ENCODE measurements at regions of chr7 and their contacts with region 1.

Region 1: GRCh38 chr7:94395141-94396036 is 694 bp downstream of the COL1A2 start:
- DNase-seq: peak; percentile 63
- H3K4me3 ChIP-seq: no peak overlapping the region
- H3K27ac ChIP-seq: no peak overlapping the region
- H3K4me1 ChIP-seq: peaks cover 15% of the 10 kb centered on the region
- H3K27me3 ChIP-seq: peaks cover 2% of the 10 kb centered on the region
- CTCF ChIP-seq: peak; percentile 78 to 80

Region 2: GRCh38 chr7:93799750-93800357 is 595.5 kb before region 1 on chr7:
- CTCF ChIA-PET with region 1: no interaction called
- dilution Hi-C with region 1: no loop called
- in situ Hi-C with region 1: no loop called
- intact Hi-C with region 1: loop called (anchors 5 kb)
- DNase-seq: peak; percentile 12
- H3K4me3 ChIP-seq: no peak overlapping the region
- H3K27ac ChIP-seq: no peak overlapping the region
- H3K4me1 ChIP-seq: no peaks in the 10 kb centered on the region
- H3K27me3 ChIP-seq: peaks cover under 1% of the 10 kb centered on the region
- CTCF ChIP-seq: peak; percentile 60 to 64

Region 3: GRCh38 chr7:94087664-94088352 is 307.6 kb before region 1 on chr7:
- CTCF ChIA-PET with region 1: no interaction called
- dilution Hi-C with region 1: no loop called
- in situ Hi-C with region 1: no loop called
- intact Hi-C with region 1: loop called (anchors 10 kb)
- DNase-seq: peak; percentile 62
- H3K4me3 ChIP-seq: no peak overlapping the region
- H3K27ac ChIP-seq: no peak overlapping the region
- H3K4me1 ChIP-seq: no peaks in the 10 kb centered on the region
- H3K27me3 ChIP-seq: peaks cover 8% of the 10 kb centered on the region
- CTCF ChIP-seq: peak; percentile 82 to 86

Region 4: GRCh38 chr7:94223375-94224070 is 171.9 kb before region 1 on chr7:
- CTCF ChIA-PET with region 1: no interaction called
- dilution Hi-C with region 1: no loop called
- in situ Hi-C with region 1: no loop called
- intact Hi-C with region 1: no loop called
- DNase-seq: peak; percentile 67
- H3K4me3 ChIP-seq: no peak overlapping the region
- H3K27ac ChIP-seq: no peak overlapping the region
- H3K4me1 ChIP-seq: peaks cover 6% of the 10 kb centered on the region
- H3K27me3 ChIP-seq: no peaks in the 10 kb centered on the region
- CTCF ChIP-seq: peak in 1 of 2 donors; percentile 8

Region 5: GRCh38 chr7:94289071-94289470 is 106.3 kb before region 1 on chr7:
- CTCF ChIA-PET with region 1: interaction called, 16 read pairs
- dilution Hi-C with region 1: loop called (anchors 5 kb)
- in situ Hi-C with region 1: loop called (anchors 5 to 10 kb)
- intact Hi-C with region 1: loop called (anchors 1 kb)
- DNase-seq: peak; percentile 61
- H3K4me3 ChIP-seq: no peak overlapping the region
- H3K27ac ChIP-seq: no peak overlapping the region
- H3K4me1 ChIP-seq: no peaks in the 10 kb centered on the region
- H3K27me3 ChIP-seq: no peaks in the 10 kb centered on the region
- CTCF ChIP-seq: peak; percentile 100

Region 6: DNA sequence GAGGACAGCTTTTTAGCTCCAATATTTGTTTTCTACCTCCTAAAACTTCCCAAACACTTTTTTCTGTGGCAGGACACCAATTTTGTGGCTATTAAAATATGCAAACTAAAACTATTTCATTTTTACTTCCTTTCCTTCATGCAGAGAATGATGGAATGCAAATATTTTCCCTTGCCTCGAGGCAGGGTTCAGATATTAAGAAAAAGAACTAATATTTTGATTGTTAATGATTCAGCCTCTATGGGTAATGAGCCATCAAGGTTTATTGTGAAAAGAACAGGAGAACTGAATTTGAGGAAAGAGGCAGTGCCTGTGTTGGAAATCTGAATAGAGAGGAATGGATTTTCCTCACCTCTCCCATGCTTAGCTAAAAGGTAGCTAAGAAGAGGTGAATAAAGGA is 71.1 kb after region 1 on chr7:
- CTCF ChIA-PET with region 1: no interaction called
- dilution Hi-C with region 1: no loop called
- in situ Hi-C with region 1: no loop called
- intact Hi-C with region 1: no loop called
- DNase-seq: peak; percentile 1
- H3K4me3 ChIP-seq: no peak overlapping the region
- H3K27ac ChIP-seq: no peak overlapping the region
- H3K4me1 ChIP-seq: no peaks in the 10 kb centered on the region
- H3K27me3 ChIP-seq: peaks cover 3% of the 10 kb centered on the region
- CTCF ChIP-seq: no peak